Activated CD4-positive, alpha-beta memory T cell treated with anti-CD3 and anti-CD28 coated beads, Interleukin-2, amount 10 ng/mL, durations not matched to agents 7 days and 5 days (primary cell): ENCODE measurements at regions of chr15 and their contacts with region 1.

Region 1: DNA sequence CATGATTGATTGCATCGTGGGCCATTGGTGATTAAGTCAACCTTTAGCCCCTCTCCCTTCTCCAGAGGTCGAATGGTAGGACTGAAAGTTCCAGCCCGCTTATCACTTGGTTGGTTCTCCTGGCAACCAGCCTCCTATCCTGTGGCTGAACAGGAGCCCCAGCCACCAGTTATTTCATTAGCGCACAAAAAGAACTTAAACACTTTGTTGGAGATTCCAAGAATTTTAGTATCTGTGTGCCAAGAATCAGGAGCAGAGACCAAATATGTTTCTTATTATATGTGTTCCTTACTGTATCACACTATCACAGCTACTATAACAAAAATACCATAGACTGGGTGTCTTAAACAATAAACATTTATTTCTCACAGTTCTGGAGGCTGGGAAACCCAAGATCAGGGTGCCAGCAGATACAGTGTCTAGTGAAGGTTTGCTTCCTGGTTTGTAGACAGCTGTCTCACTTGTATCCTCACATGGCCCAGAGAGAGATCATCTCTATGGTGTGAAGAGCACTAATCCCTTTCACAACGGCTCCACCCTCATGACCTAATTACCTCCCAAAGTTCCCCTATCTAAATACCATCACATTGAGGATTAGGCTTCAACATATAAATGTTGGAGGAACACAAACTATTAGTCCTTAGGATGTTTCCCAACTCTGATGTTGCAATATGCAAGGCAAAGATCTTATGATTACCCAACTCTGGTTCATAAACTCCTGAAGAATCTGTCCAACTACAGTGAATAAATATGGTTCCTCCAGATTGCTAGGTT is 30.5 kb upstream of the APH1B start:
- DNase-seq: no peak
- H3K4me3 Mint-ChIP-seq: no peak overlapping the region
- H3K27ac Mint-ChIP-seq: no peak overlapping the region
- H3K4me1 Mint-ChIP-seq: peaks cover 27% of the 10 kb centered on the region
- H3K27me3 Mint-ChIP-seq: no peaks in the 10 kb centered on the region

Region 2: DNA sequence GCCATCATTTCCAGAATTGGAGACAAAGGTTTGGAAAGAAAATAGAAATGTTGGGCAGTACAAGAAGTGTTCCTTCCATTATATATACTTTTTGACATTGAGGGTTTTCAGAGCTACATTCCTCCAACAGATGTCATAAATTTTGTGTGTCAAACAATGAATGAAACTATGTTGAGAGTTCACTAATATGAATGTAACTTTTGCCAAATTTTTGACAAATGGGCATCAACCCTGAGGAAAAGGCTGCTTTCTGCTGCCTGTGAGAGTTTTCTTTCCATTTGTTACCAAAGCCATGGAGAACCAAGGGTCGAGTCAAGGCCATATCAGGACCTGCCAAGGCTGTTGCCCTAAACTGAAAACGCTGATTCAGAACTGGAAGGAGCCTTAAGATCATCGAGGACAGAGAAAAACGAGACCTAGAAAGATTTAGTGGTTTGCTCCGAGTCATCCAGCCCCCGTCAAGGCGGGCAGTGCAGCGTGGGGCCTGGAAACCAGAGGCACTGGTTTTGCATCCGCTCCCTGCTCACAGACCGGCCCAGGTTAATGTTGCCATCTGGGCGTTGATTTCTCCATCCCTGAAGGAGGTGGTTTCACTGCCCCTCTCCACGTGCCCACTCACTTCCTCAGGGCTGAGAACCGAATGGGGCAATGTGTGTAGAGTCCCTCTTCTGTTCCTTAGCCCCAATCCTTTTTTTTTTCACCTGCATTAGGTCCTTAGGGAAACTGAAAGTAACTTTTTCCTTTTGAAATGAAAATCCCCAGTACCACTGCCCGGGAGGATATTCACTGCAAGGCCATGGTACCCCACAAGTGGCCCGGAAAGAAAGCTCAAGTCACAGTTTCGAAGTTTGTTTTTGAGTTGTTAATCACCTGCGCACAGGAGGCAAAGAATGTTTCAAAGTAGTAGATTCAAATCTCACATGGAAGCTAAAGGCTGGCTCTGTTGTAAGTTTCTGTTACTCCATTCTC is 171.6 kb before region 1 on chr15:
- CTCF ChIA-PET with region 1: no interaction called
- POLR2A ChIA-PET with region 1: no interaction called
- DNase-seq: no peak
- H3K4me3 Mint-ChIP-seq: no peak overlapping the region
- H3K27ac Mint-ChIP-seq: no peak overlapping the region
- H3K4me1 Mint-ChIP-seq: peaks cover 22% of the 10 kb centered on the region
- H3K27me3 Mint-ChIP-seq: peaks cover 9% of the 10 kb centered on the region

Region 3: GRCh38 chr15:63157118-63157843 is 89.6 kb before region 1 on chr15 and contains the start of gene RPS27L:
- CTCF ChIA-PET with region 1: no interaction called
- POLR2A ChIA-PET with region 1: interaction called, 10 read pairs
- DNase-seq: peak; percentile 91
- H3K4me3 Mint-ChIP-seq: peak within 1 kb of the TSS; percentile 99
- H3K27ac Mint-ChIP-seq: peak within 1 kb of the TSS; percentile 98
- H3K4me1 Mint-ChIP-seq: peaks cover 25% of the 10 kb centered on the region
- H3K27me3 Mint-ChIP-seq: no peaks in the 10 kb centered on the region
- total RNA-seq, gene RPS27L: 171 to 173 TPM

Region 4: GRCh38 chr15:63234451-63234870 is 12.4 kb before region 1 on chr15:
- CTCF ChIA-PET with region 1: interaction called, 5 read pairs
- POLR2A ChIA-PET with region 1: interaction called, 23 read pairs
- DNase-seq: no peak
- H3K4me3 Mint-ChIP-seq: no peak overlapping the region
- H3K27ac Mint-ChIP-seq: no peak overlapping the region
- H3K4me1 Mint-ChIP-seq: peaks cover 62% of the 10 kb centered on the region
- H3K27me3 Mint-ChIP-seq: no peaks in the 10 kb centered on the region